Activated naive CD4-positive, alpha-beta T cell treated with anti-CD3 and anti-CD28 coated beads for 36 hours (primary cell): ENCODE measurements at regions of chr4 and their contacts with region 1.

Region 1: GRCh38 chr4:108972613-108973283 is 209.9 kb upstream of the ETNPPL start:
- DNase-seq: peak; percentile 11
- H3K4me3 Mint-ChIP-seq: no peak overlapping the region
- H3K27ac Mint-ChIP-seq: peak overlapping the region; percentile 76
- H3K4me1 Mint-ChIP-seq: peaks cover 23% of the 10 kb centered on the region
- H3K27me3 Mint-ChIP-seq: no peaks in the 10 kb centered on the region

Region 2: GRCh38 chr4:107989537-107990386 is 983.0 kb before region 1 on chr4 and contains the start of gene HADH:
- CTCF ChIA-PET with region 1: no interaction called
- intact Hi-C with region 1: loop called (anchors 10 kb)
- DNase-seq: peak; percentile 94
- H3K4me3 Mint-ChIP-seq: peak within 1 kb of the TSS; percentile 98
- H3K27ac Mint-ChIP-seq: peak within 1 kb of the TSS; percentile 90
- H3K4me1 Mint-ChIP-seq: peaks cover 57% of the 10 kb centered on the region
- H3K27me3 Mint-ChIP-seq: no peaks in the 10 kb centered on the region
- total RNA-seq, gene HADH: 56.1 to 57.6 TPM

Region 3: DNA sequence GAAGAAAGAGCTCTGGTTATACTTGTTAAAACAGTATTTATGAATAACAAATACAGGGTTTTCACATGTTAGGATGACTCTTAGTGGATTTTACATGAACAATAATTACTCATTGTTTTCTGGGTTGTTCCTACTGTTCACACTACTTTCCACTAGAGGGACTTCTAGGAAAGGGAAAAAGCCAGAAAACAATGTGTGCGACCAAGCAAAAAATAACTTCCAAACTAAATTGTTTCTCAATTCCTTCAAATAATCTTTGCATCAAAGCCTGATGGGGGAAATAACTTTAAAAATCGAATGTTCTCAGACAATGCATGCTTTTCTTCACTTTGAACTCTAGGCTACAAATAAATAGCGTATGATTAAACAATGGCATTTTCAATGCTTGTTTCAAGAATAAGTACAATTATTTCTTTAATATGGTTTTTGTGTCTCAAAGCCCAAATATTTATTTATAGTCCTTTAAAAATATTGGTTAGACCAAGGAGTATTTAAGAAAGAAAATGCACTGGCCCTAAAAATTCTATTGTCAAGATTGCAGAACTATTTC is 137.8 kb before region 1 on chr4:
- CTCF ChIA-PET with region 1: no interaction called
- intact Hi-C with region 1: loop called (anchors 1 kb)
- DNase-seq: no peak
- H3K4me3 Mint-ChIP-seq: no peak overlapping the region
- H3K27ac Mint-ChIP-seq: no peak overlapping the region
- H3K4me1 Mint-ChIP-seq: peaks cover 2% of the 10 kb centered on the region
- H3K27me3 Mint-ChIP-seq: no peaks in the 10 kb centered on the region

Region 4: DNA sequence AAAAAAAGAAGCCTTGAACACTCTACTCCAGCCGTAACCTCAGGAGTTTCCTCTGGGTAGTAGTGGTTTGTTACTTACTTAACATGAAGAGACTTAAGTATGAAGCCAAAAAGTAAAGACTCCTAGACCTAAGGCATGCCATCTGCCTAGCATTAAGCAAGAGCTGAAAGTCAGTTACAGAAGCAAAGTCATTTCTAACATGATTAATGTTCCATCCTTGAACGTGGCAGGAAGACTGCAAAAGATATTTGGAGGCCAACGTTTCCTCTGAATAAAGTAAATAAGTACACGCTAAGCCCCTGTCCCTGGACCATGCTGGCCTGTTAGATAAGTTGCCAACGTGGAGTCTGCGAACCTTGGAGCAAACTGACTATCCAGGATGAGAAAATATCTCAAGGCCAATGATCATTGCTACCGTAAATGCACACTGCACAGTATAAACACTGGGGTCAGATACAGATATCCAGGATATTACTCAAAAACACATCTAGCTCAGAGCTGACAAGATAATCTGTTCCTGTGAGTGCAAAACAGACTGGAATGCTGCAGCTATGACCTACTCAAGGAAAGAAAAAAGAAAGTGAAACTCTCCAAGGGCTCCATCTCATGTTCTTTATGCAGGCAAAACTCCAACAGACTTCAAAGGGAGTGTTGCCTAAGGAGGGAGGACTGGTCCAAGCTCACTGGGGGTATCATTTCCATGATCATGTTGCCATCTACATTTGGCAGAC is 73.9 kb after region 1 on chr4:
- CTCF ChIA-PET with region 1: no interaction called
- intact Hi-C with region 1: loop called (anchors 2 kb)
- DNase-seq: no peak
- H3K4me3 Mint-ChIP-seq: no peak overlapping the region
- H3K27ac Mint-ChIP-seq: no peak overlapping the region
- H3K4me1 Mint-ChIP-seq: peaks cover 7% of the 10 kb centered on the region
- H3K27me3 Mint-ChIP-seq: no peaks in the 10 kb centered on the region

Region 5: DNA sequence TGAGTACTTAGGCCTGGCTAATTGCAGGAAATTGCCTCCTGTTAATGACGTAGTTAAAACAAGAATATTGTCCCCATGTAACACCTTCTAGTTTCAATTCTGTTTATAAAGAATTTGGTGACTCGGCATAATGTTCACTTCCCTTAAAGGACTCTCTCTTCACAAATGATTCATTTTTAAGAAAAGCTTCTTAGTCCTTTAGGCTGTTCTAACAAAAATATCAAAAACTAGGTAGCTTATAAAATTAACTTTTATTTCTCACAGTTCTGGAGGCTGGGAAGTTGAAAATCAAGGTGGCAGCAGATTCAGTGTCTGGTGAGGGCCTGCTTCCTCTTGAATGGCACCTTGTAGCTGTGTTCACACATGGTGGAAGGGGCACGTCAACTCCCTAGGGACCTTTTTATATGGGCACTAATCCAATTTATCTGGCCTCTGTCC is 305.9 kb after region 1 on chr4:
- CTCF ChIA-PET with region 1: no interaction called
- intact Hi-C with region 1: loop called (anchors 2 kb)
- DNase-seq: no peak
- H3K4me3 Mint-ChIP-seq: no peak overlapping the region
- H3K27ac Mint-ChIP-seq: no peak overlapping the region
- H3K4me1 Mint-ChIP-seq: peaks cover 10% of the 10 kb centered on the region
- H3K27me3 Mint-ChIP-seq: peaks cover 1% of the 10 kb centered on the region

Region 6: GRCh38 chr4:109815151-109816081 is 842.7 kb after region 1 on chr4 and contains the start of gene GAR1:
- CTCF ChIA-PET with region 1: no interaction called
- intact Hi-C with region 1: loop called (anchors 2 kb)
- DNase-seq: peak; percentile 93
- H3K4me3 Mint-ChIP-seq: peak within 1 kb of the TSS; percentile 99
- H3K27ac Mint-ChIP-seq: peak within 1 kb of the TSS; percentile 95
- H3K4me1 Mint-ChIP-seq: peaks cover 47% of the 10 kb centered on the region
- H3K27me3 Mint-ChIP-seq: no peaks in the 10 kb centered on the region
- total RNA-seq, gene GAR1: 18.9 to 24.4 TPM